ENCODE measurements at regions of chr3 and their contacts with region 1.

Region 1: GRCh38 chr3:196317687-196318467 is at the start of gene DYNLT2B:
- DNase-seq: peak; percentile 67 to 96 (median 83)
- ATAC-seq: peak; percentile 89
- H3K4me3 ChIP-seq: peak within 1 kb of the TSS; percentile 82
- H3K4me3 Mint-ChIP-seq: peak within 1 kb of the TSS; percentile 97
- H3K27ac ChIP-seq: peak within 1 kb of the TSS; percentile 83 to 91
- H3K27ac Mint-ChIP-seq: peak within 1 kb of the TSS; percentile 96
- H3K4me1 ChIP-seq: peaks cover 20% of the 10 kb centered on the region
- H3K4me1 Mint-ChIP-seq: peaks cover 5% of the 10 kb centered on the region
- H3K27me3 ChIP-seq: no peaks in the 10 kb centered on the region
- H3K27me3 Mint-ChIP-seq: no peaks in the 10 kb centered on the region
- CTCF ChIP-seq: no peak
- total RNA-seq, gene DYNLT2B: 4.5 to 4.6 TPM

Region 2: DNA sequence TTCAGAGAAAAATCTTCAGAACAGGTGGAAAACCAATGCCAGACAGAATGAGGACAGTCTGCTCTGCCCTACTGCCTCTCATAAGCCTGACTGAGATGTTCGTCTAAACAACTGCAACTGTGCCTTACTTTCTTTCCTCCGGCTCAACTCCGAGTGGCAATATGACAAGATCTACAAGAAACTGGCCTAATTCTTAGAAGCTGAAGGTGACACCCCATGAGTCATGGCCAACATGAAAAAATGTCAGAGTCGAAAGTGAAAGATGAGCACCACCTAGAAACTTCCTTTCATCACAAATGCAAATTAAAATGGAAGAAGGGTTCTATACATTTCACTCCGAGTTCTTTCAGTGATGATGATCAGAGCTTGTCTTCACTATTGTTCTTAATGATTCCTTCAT is 43.3 kb before region 1 on chr3:
- CTCF ChIA-PET with region 1: interaction called, 3 read pairs
- POLR2A ChIA-PET with region 1: interaction called, 16 read pairs
- intact Hi-C with region 1: no loop called
- DNase-seq: peak; percentile 10 to 91 (median 44)
- ATAC-seq: peak; percentile 91
- H3K4me3 ChIP-seq: peak overlapping the region; percentile 31
- H3K4me3 Mint-ChIP-seq: peak overlapping the region; percentile 61
- H3K27ac ChIP-seq: peak overlapping the region; percentile 51 to 76
- H3K27ac Mint-ChIP-seq: peak overlapping the region; percentile 91
- H3K4me1 ChIP-seq: peaks cover 41% of the 10 kb centered on the region
- H3K4me1 Mint-ChIP-seq: peaks cover 25% of the 10 kb centered on the region
- H3K27me3 ChIP-seq: no peaks in the 10 kb centered on the region
- H3K27me3 Mint-ChIP-seq: no peaks in the 10 kb centered on the region
- CTCF ChIP-seq: no peak

Region 3: DNA sequence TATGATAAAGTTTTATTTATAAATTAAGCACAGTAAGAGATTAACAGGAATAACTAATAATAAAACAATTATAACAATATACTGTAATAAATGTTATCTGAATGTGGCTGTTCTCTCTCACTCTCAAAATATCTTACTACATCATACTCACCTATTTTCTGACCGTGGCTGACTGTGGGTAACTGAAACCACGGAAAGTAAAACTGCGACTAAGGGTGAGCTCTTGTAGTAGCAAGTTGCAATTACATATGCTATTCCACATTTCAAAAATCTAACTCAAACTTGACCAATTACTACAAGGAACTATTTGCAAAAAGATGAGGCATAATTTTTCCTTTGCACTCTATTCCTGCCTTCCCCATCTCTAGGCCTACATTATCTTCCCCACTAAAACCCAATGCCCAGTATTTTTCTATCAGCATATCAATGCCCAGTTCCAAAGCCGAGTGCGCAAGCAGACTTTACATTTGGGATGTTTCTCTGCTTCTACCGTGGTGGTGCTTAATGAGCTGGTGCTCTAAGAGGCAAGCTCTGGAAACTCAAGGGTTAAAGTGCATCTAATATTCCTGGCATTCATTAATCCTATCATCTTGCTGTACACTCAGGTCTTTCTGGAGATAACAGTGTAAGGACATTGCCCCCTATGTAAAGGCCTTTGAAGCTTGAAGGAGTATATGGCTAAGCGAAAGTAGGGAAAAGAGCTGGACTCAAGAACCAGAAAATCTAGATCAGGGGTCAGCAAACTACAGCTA is 37.0 kb before region 1 on chr3:
- CTCF ChIA-PET with region 1: interaction called, 3 read pairs
- POLR2A ChIA-PET with region 1: interaction called, 16 read pairs
- intact Hi-C with region 1: loop called in 1 of 2 experiments (anchors 5 kb)
- DNase-seq: no peak
- ATAC-seq: no peak
- H3K4me3 ChIP-seq: no peak overlapping the region
- H3K4me3 Mint-ChIP-seq: no peak overlapping the region
- H3K27ac ChIP-seq: no peak overlapping the region
- H3K27ac Mint-ChIP-seq: no peak overlapping the region
- H3K4me1 ChIP-seq: peaks cover 29% of the 10 kb centered on the region
- H3K4me1 Mint-ChIP-seq: peaks cover 53% of the 10 kb centered on the region
- H3K27me3 ChIP-seq: no peaks in the 10 kb centered on the region
- H3K27me3 Mint-ChIP-seq: no peaks in the 10 kb centered on the region
- CTCF ChIP-seq: no peak

Measured in CD4-positive, alpha-beta T cell (primary cell).